Activated CD8-positive, alpha-beta T cell treated with anti-CD3 and anti-CD28 coated beads, Interleukin-2, amount 10 ng/mL, durations not matched to agents 7 days and 5 days (primary cell): ENCODE measurements at regions of chr9 and their contacts with region 1.

Region 1: GRCh38 chr9:91433180-91433579 is 9.5 kb upstream of the NFIL3 start:
- DNase-seq: no peak
- ATAC-seq: peak; percentile 75
- H3K4me3 Mint-ChIP-seq: no peak overlapping the region
- H3K27ac Mint-ChIP-seq: no peak overlapping the region
- H3K4me1 Mint-ChIP-seq: peaks cover 9% of the 10 kb centered on the region
- H3K27me3 Mint-ChIP-seq: peaks cover 25% of the 10 kb centered on the region

Region 2: DNA sequence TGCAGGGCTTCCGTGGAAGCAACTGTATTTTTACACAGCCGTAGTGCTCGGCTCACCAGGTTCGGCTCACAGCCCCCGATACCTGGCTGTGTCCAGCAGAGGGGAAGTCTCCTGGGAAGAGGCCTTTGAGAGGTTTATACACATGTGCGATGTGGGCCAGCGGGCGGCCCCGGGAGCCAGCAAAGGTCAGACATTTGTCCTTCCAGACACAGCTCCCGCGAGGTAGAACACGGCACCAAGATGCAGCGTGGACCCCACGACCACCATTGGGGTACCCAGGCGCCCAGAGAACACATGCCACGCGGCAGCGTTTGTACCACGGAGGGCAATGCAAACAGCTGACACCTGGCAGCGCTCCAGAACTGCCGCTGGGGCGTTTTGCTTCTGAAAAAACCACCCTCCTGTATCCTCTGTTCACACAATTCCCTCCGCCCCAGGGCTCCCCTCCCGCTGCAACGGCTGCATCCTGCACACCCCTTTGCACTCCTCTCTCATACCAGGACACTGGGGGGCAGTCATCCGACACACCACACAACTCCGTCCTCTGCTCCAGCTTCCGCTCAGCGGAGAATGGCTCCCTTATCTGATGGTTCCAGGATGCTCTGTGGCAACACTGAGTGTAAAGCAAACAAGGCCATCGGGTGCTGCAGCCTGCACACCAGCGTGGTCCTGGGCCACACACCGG is 396.2 kb before region 1 on chr9:
- CTCF ChIA-PET with region 1: interaction called, 80 read pairs
- POLR2A ChIA-PET with region 1: no interaction called
- DNase-seq: peak; percentile 87
- ATAC-seq: peak; percentile 96
- H3K4me3 Mint-ChIP-seq: peak overlapping the region; percentile 33
- H3K27ac Mint-ChIP-seq: peak overlapping the region; percentile 74
- H3K4me1 Mint-ChIP-seq: peaks cover 69% of the 10 kb centered on the region
- H3K27me3 Mint-ChIP-seq: peaks cover under 1% of the 10 kb centered on the region